ENCODE measurements at regions of chr17 and their contacts with region 1.

Region 1: GRCh38 chr17:19979917-19980770 is 2.5 kb upstream of the AKAP10 start:
- DNase-seq: no peak
- H3K4me3 ChIP-seq: no peak overlapping the region
- H3K27ac ChIP-seq: no peak overlapping the region
- H3K4me1 ChIP-seq: peaks cover 31% of the 10 kb centered on the region
- H3K27me3 ChIP-seq: no peaks in the 10 kb centered on the region
- CTCF ChIP-seq: no peak
- POLR2A ChIP-seq: no peak

Region 2: GRCh38 chr17:20226814-20227482 is 246.8 kb after region 1 on chr17:
- intact Hi-C with region 1: loop called (anchors 10 kb)
- DNase-seq: no peak
- H3K4me3 ChIP-seq: no peak overlapping the region
- H3K27ac ChIP-seq: no peak overlapping the region
- H3K4me1 ChIP-seq: no peaks in the 10 kb centered on the region
- H3K27me3 ChIP-seq: no peaks in the 10 kb centered on the region
- CTCF ChIP-seq: peak; percentile 46 to 68 (median 66)
- POLR2A ChIP-seq: no peak